ENCODE measurements at regions of chr10 and their contacts with region 1.

Region 1: GRCh38 chr10:50993771-50994251 is 80.5 kb upstream of the PRKG1 start:
- DNase-seq: peak; percentile 67
- H3K4me3 ChIP-seq: peak overlapping the region; percentile 37
- H3K27me3 ChIP-seq: no peaks in the 10 kb centered on the region
- CTCF ChIP-seq: no peak

Region 2: GRCh38 chr10:50824782-50825181 is 169.0 kb before region 1 on chr10:
- CTCF ChIA-PET with region 1: no interaction called
- POLR2A ChIA-PET with region 1: no interaction called
- DNase-seq: no peak
- H3K4me3 ChIP-seq: no peak overlapping the region
- H3K27me3 ChIP-seq: 0 out of 2 replicates have a peak, but pooled peaks cover 1% of the 10 kb centered on the region
- CTCF ChIP-seq: no peak

Region 3: GRCh38 chr10:51176976-51177695 is 183.3 kb after region 1 on chr10:
- CTCF ChIA-PET with region 1: no interaction called
- POLR2A ChIA-PET with region 1: no interaction called
- DNase-seq: peak; percentile 63
- H3K4me3 ChIP-seq: no peak overlapping the region
- H3K27me3 ChIP-seq: no peaks in the 10 kb centered on the region
- CTCF ChIP-seq: no peak

Region 4: GRCh38 chr10:52313933-52314816 is 1320.4 kb after region 1 on chr10 and contains the start of gene DKK1:
- CTCF ChIA-PET with region 1: no interaction called
- POLR2A ChIA-PET with region 1: interaction called, 11 read pairs
- DNase-seq: peak; percentile 44
- H3K4me3 ChIP-seq: peak within 1 kb of the TSS; percentile 97
- H3K27me3 ChIP-seq: no peaks in the 10 kb centered on the region
- CTCF ChIP-seq: peak; percentile 90
- polyA plus RNA-seq, gene DKK1: 575 and 1,028 TPM in 2 replicates